Posterior vena cava (tissue), 2 donors: ENCODE measurements at regions of chr2 and their contacts with region 1.

Region 1: GRCh38 chr2:125730921-125731320 is 925.0 kb upstream of the GYPC start:
- DNase-seq: no peak

Region 2: DNA sequence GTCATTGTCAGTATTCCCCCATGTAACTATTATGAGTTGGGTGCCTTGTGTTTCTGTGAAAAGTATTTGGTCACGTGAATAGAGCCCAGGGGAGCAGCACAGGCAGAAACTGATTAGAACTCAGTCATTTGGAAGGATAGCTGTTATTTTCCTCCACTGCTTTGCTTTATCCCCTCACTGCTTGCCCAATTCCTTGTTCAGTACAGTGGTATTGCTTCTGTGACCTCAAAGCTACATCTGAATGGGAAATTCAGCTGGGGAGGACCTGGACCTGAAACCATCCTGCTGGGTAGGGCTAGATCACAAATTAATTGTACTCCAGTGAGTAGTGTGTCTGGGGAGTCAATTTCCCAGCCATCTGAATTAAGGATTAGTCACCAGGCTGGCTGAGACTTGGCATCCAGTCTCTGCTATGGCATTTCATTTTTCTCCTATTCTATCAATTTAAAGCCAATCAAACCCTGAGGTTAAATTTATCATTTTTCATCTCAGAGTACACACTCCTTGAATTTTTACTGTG is 306.6 kb before region 1 on chr2:
- intact Hi-C with region 1: no loop called
- DNase-seq: no peak

Region 3: DNA sequence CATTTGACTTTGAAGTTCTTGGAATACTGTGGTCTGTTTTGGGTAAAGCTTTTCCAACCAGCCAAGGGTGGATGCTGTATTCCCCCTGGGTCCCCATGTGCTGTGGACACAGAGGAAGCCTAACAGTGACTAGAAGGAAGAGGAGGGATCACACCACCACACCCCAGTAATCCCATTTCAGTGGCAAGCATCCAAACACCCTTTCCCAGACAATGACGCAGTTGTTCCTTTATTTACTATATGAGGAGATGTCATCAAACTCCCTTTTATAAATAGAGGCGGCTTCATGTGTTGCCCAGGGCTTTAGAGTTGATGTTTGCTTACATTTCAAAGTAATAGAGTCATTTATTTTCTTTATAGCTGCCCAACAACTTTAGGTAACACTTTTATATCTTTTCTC is 34.4 kb before region 1 on chr2:
- intact Hi-C with region 1: loop called in 1 of 2 experiments (anchors 2 kb)
- DNase-seq: no peak